ENCODE measurements at regions of chr10 and their contacts with region 1.

Region 1: GRCh38 chr10:73096449-73097304 is at the start of gene P4HA1:
- DNase-seq: peak; percentile 99 to 100 (median 100)
- ATAC-seq: peak; percentile 96 to 98 (median 97)
- H3K4me3 ChIP-seq: peak within 1 kb of the TSS; percentile 47 to 93 (median 86)
- H3K27ac ChIP-seq: peak within 1 kb of the TSS; percentile 90 to 99 (median 97)
- H3K4me1 ChIP-seq: peaks cover 0 to 42% (median 19%) of the 10 kb centered on the region in 12 donors
- H3K27me3 ChIP-seq: no peaks in the 10 kb centered on the region
- CTCF ChIP-seq: peak; percentile 49 to 87 (median 72)
- POLR2A ChIP-seq: peak in 1 of 2 donors; percentile 98
- total RNA-seq, gene P4HA1: 44.5 to 71.7 (median 54.2) TPM

Region 2: DNA sequence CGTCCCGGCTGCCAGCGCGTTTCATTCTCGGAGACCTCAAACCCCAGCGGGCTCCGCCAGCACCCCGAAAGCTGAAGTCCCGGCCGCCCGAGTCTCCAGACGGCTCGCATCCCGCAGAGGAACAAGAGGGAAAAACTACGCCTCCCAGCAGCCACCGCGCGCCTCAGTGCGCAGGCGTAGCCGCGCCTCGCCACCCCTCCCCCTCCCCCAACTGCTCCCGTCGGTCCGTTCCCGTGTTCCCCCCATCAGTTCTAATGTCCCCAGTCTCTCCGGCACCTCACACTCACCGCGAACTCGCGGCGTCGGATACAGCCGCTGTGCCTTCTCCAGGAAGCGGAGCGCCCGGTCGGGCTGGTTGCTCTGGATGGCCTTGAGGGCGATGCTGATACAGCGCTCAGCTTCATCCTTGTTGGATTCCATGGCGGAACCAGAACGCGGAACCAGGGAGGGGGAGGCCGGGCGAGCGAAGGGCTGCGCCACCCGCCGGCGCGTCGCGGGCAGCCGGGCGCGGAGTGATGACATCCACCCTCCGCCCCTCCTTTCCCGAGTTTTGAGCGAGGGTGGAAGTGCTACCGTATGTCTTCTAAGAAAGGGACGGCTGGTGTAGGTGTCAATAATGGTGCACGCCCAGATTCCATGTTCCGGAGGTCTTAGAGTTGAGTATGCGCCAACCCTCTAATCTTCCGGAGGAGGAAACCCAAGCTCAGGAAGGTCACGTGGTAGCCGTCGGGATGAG is 742.0 kb before region 1 on chr10 and contains the start of gene DNAJB12:
- intact Hi-C with region 1: loop called in 1 of 10 experiments (anchors 10 kb)
- DNase-seq: peak; percentile 92 to 95 (median 92)
- ATAC-seq: peak; percentile 85 to 94 (median 92)
- H3K4me3 ChIP-seq: peak within 1 kb of the TSS; percentile 73 to 98 (median 90)
- H3K27ac ChIP-seq: peak within 1 kb of the TSS; percentile 87 to 98 (median 97)
- H3K4me1 ChIP-seq: peaks cover 0 to 42% (median 30%) of the 10 kb centered on the region in 12 donors
- H3K27me3 ChIP-seq: no peaks in the 10 kb centered on the region
- CTCF ChIP-seq: peak in 1 of 12 donors; percentile 10
- POLR2A ChIP-seq: peak in 1 of 2 donors; percentile 69
- total RNA-seq, gene DNAJB12: 23.8 to 42.5 (median 29.1) TPM

Region 3: DNA sequence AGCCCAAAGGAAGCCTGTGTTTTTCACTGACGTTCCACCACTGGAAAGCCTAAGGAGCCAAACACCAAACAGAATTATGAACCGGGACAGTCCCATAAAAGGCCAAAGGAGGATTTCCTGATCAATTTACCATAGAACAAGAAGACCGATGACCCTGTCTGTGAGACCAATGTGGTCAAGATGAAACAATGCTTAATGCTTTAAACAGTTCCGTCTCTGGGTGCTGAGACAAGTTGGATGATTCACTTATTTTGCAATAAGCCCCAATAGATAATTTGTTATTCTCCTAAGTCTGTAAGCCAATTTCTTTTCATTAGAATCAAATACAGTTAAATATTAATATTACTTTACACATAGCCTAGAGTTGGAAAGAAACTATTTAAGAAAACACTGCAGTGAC is 605.7 kb before region 1 on chr10:
- intact Hi-C with region 1: no loop called
- DNase-seq: no peak
- ATAC-seq: no peak
- H3K4me3 ChIP-seq: no peak overlapping the region
- H3K27ac ChIP-seq: no peak overlapping the region
- H3K4me1 ChIP-seq: no peaks in the 10 kb centered on the region
- H3K27me3 ChIP-seq: no peaks in the 10 kb centered on the region
- CTCF ChIP-seq: no peak
- POLR2A ChIP-seq: no peak

Region 4: GRCh38 chr10:72746426-72747363 is 350.0 kb before region 1 on chr10:
- intact Hi-C with region 1: no loop called
- DNase-seq: no peak
- ATAC-seq: no peak
- H3K4me3 ChIP-seq: no peak overlapping the region
- H3K27ac ChIP-seq: no peak overlapping the region
- H3K4me1 ChIP-seq: peaks cover 0 to 41% (median 6%) of the 10 kb centered on the region in 12 donors
- H3K27me3 ChIP-seq: no peaks in the 10 kb centered on the region
- CTCF ChIP-seq: no peak
- POLR2A ChIP-seq: no peak

Region 5: GRCh38 chr10:73110345-73110849 is 13.7 kb after region 1 on chr10 and contains the start of gene NUDT13:
- intact Hi-C with region 1: loop called in 4 of 10 experiments (anchors 1 to 2 kb)
- DNase-seq: peak in 4 of 5 donors; percentile 79 to 82 (median 80)
- ATAC-seq: peak; percentile 95 to 98 (median 96)
- H3K4me3 ChIP-seq: peak within 1 kb of the TSS; percentile 38 to 70 (median 59)
- H3K27ac ChIP-seq: peak within 1 kb of the TSS; percentile 80 to 97 (median 88)
- H3K4me1 ChIP-seq: peaks cover 0 to 22% (median 6%) of the 10 kb centered on the region in 12 donors
- H3K27me3 ChIP-seq: no peaks in the 10 kb centered on the region
- CTCF ChIP-seq: no peak
- POLR2A ChIP-seq: peak in 1 of 2 donors; percentile 27
- total RNA-seq, gene NUDT13: 2.1 to 5.7 (median 3.2) TPM

Measured in heart left ventricle (tissue), 16 donors.